ENCODE measurements at regions of chr10 and their contacts with region 1.

Region 1: DNA sequence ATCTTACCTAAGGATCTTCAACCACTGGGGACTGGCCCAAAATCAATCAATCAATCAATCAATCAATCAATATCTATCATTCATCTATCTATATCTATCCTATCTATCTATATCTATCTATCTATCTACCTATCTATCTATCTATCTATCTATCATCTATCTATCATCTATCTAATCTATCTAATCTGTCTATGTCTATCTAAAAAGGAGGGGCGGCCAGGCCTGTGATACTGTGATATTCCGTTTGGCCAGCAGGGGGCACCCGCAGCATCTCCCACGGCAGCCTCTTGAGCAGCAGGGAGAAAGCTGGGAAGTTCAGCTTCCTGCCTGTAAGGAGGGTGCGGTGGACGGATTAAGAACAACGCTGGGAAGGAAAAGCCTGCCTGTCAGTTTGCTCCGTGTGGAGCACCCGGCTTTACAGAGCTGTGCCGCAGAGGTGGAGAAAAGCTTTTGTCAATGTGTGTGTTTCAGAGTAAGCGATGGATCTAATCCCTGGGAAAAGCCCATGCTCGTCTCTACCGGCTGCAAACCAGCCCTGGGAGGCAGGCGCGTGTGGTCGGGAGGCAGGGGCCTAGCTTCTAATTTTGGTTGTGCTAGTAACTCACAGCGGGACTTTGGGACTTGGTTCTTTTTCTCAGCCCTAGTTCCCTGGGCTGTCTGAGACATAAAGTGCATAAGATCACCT is 125.0 kb downstream of the SH2D4B start:
- DNase-seq: peak; percentile 26
- H3K4me3 ChIP-seq: peak overlapping the region; percentile 41
- CTCF ChIP-seq: peak; percentile 93

Region 2: DNA sequence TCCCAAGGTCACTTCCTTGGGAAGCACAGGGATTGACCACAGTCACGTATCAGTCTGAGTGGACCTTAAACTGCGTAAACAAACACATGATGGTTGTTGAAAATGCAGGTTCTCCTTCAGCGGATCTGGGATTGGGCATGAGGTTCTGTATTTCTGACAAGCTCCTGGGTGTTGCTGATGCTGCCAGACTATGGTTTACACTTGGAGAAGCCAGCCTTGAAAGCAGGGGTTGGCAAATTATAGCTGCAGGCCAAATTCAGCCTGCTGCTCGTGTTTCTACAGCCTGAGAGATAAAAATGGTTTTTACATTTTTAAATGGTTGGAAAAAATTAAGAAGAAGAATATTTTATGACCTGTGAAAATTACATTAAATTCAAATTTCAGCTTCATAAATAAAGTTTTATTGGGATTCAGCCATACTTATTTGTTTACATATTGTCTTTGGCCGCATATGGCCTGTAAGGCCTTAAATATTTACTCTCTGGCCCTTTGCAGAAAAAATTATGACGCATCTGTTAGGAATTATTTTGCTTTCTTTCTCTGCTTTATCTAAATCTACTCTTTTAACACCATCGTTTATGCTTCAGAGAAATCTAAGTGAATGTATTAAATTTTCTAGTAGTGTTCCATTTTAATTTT is 15.4 kb before region 1 on chr10:
- CTCF ChIA-PET with region 1: interaction called, 62 read pairs
- POLR2A ChIA-PET with region 1: no interaction called
- DNase-seq: no peak
- H3K4me3 ChIP-seq: no peak overlapping the region
- CTCF ChIP-seq: no peak

Region 3: GRCh38 chr10:80681142-80681541 is 18.4 kb after region 1 on chr10:
- CTCF ChIA-PET with region 1: interaction called, 28 read pairs
- POLR2A ChIA-PET with region 1: no interaction called
- DNase-seq: no peak
- H3K4me3 ChIP-seq: no peak overlapping the region
- CTCF ChIP-seq: no peak

Region 4: DNA sequence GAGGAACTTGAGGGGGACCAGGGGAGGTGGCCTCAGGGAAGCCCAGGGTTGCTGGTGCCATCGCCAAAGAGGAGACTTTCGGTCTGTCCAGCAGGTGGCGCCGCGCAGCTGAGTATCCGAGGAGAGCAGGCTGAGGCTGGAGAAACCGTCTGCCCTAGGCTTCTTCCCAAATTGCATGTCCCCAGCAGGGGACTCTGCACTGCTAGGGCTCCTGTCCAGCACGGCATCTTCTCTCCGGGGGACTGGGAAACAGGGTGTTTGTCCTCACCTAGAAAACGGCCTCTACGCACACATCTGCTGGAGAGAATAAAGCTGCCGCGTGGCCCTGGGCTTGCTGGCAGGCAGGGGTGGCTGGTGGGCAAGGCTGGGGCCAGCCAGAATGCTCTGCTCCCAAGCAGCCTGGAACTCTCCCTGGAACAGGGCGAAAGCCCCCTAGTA is 36.9 kb after region 1 on chr10:
- CTCF ChIA-PET with region 1: interaction called, 14 read pairs
- POLR2A ChIA-PET with region 1: no interaction called
- DNase-seq: no peak
- H3K4me3 ChIP-seq: no peak overlapping the region
- CTCF ChIP-seq: peak; percentile 91

Region 5: GRCh38 chr10:80769700-80770160 is 107.0 kb after region 1 on chr10:
- CTCF ChIA-PET with region 1: no interaction called
- POLR2A ChIA-PET with region 1: no interaction called
- DNase-seq: no peak
- H3K4me3 ChIP-seq: no peak overlapping the region
- CTCF ChIP-seq: no peak